BJ (cell line): ENCODE measurements at regions of chr16 and their contacts with region 1.

Region 1: DNA sequence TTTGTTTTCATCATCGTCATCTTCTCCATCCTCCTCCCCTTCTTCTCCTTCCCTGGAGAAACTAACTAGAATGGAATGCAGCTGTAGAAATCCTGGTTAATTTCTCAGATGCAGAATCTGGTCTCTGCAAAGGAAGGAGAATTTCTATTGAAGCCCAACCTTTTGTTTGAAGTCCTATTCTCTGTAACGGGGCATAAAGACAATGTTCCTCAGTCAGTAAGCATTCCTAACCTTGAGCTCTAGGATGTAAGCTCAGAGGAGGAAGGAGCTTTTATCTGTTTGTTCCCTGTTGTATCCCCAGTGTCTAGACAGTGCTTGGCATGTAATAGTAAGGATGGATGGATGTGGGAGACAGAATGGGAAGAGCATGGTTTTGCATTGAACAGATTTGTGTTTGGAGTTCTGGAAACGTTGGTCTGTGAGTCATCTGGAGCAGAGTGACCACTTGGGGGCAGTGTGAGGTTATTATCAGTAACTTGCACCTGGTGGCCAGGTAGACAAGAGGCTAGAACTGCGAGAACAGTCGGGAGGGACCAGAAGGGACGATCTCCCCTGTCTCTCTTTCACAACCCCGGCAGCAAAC is 363.7 kb downstream of the SNX29 start:
- DNase-seq: peak; percentile 39
- H3K4me3 ChIP-seq: no peak overlapping the region
- H3K27me3 ChIP-seq: no peaks in the 10 kb centered on the region
- CTCF ChIP-seq: peak; percentile 29; the same call in 1 of the 2 replicates

Region 2: GRCh38 chr16:12314653-12315185 is 25.5 kb before region 1 on chr16:
- CTCF ChIA-PET with region 1: interaction called, 10 read pairs
- POLR2A ChIA-PET with region 1: no interaction called
- DNase-seq: no peak
- H3K4me3 ChIP-seq: no peak overlapping the region
- H3K27me3 ChIP-seq: no peaks in the 10 kb centered on the region
- CTCF ChIP-seq: no peak